Transverse colon (tissue), 4 donors: ENCODE measurements at regions of chrX and their contacts with region 1.

Region 1: GRCh38 chrX:144275843-144276242 is 392.0 kb downstream of the UBE2NL start:
- DNase-seq: no peak
- H3K4me3 ChIP-seq: no peak overlapping the region
- H3K27ac ChIP-seq: no peak overlapping the region
- H3K4me1 ChIP-seq: no peaks in the 10 kb centered on the region
- H3K27me3 ChIP-seq: no peaks in the 10 kb centered on the region
- CTCF ChIP-seq: no peak
- EP300 ChIP-seq: no peak
- POLR2A ChIP-seq: no peak

Region 2: GRCh38 chrX:144265641-144266040 is 10.2 kb before region 1 on chrX:
- in situ Hi-C with region 1: no loop called
- intact Hi-C with region 1: loop called (anchors 1 kb)
- DNase-seq: no peak
- H3K4me3 ChIP-seq: no peak overlapping the region
- H3K27ac ChIP-seq: no peak overlapping the region
- H3K4me1 ChIP-seq: no peaks in the 10 kb centered on the region
- H3K27me3 ChIP-seq: no peaks in the 10 kb centered on the region
- CTCF ChIP-seq: no peak
- EP300 ChIP-seq: no peak
- POLR2A ChIP-seq: no peak